Activated CD4-positive, alpha-beta memory T cell treated with anti-CD3 and anti-CD28 coated beads, Interleukin-2, amount 10 ng/mL, durations not matched to agents 7 days and 5 days (primary cell): ENCODE measurements at regions of chr12 and their contacts with region 1.

Region 1: DNA sequence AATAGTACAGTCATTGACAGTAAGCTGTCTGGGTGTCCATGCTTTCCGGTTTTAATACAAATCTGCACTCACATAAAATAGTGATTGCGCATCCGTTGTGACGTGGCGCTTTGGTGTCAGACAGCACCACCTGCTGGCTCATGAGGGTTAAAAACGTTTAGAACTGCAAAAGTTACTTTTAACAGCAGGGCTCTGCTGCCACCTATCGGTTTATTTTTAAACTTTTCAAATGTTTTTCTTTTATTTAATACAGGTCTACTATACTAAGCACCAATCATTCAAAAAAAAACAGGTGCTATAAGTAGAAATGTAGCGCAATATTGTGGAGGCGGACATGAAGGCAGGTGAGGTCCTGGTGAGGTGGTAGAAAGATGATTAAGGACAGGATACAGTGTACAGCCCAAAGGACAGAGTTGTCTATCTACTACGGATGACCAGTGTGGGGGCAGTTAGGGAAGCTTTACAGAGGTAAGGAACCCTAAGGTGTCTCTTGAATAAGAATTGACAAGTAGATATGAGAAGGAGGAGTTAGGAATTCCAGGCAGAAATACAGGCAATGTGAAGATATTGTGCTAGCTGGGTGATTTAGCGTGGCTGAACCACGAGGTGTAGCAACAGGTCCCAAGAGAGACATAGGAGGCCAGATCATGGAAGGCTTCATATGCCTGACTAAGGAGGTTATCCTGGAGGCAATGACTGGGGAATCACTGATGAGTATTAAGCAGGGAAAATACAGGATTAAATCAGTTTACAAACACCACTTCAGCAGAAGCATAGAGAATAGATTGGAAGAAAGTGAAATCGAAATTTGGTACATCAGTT is 91.5 kb upstream of the PRB2 start:
- DNase-seq: peak; percentile 84
- H3K4me3 Mint-ChIP-seq: no peak overlapping the region
- H3K27ac Mint-ChIP-seq: no peak overlapping the region
- H3K4me1 Mint-ChIP-seq: peaks cover 4% of the 10 kb centered on the region
- H3K27me3 Mint-ChIP-seq: peaks cover 27% of the 10 kb centered on the region

Region 2: DNA sequence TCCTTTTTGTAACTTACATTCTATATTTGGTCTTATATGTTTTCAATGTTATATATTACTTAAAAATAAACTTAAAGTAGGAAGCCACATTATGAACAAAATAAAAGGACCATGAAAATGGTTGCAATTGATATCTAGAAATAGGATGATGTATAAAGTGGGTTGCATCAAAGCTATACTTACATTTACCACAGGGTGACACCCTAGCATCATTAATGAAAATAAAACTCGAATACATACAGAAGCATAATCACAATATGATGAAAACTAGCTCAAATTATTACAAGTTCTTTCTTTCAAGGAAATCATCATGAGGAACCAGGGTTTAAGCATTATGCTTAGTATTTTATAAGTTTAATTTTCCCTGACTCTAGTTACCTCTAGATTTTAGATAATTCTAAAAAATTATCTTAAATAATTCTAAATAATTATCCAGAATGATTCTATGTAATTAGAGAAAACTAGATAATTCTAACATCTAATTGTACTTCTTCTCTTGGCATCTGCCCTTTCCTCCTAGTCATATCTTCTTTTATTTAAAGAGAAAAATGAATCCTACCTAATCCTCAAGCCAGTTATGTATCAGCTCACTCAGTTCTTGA is 715.6 kb before region 1 on chr12:
- CTCF ChIA-PET with region 1: interaction called, 17 read pairs
- POLR2A ChIA-PET with region 1: no interaction called
- DNase-seq: no peak
- H3K4me3 Mint-ChIP-seq: no peak overlapping the region
- H3K27ac Mint-ChIP-seq: no peak overlapping the region
- H3K4me1 Mint-ChIP-seq: no peaks in the 10 kb centered on the region
- H3K27me3 Mint-ChIP-seq: peaks cover 44% of the 10 kb centered on the region

Region 3: DNA sequence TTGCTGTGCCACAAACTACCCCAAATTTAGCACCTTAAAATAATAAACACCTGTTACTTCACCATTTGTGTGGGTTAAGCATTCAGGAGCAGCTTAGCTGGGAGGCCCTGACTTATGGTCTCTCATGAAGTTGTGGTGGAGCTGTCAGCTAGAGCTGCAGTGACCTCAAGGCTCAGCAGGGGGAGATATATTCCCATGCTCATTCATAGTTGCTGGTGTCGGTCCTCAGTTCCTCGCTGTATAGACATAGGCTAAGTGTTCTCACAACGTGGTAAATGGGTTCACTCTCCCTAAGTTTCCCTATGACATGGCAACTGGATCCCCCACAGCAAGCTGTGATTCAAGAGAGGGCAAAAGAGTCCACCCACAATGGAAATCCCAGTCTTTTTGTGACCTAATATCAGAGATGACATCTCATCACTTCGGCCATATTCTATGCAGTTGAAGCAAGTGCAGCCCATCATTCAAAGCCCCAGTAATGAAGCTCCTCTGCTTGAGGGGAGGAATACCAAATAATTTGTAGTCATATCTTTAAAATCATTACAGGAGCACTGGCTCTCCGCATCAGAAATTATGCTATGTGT is 258.4 kb before region 1 on chr12:
- CTCF ChIA-PET with region 1: interaction called, 17 read pairs
- POLR2A ChIA-PET with region 1: no interaction called
- DNase-seq: peak; percentile 35
- H3K4me3 Mint-ChIP-seq: no peak overlapping the region
- H3K27ac Mint-ChIP-seq: no peak overlapping the region
- H3K4me1 Mint-ChIP-seq: no peaks in the 10 kb centered on the region
- H3K27me3 Mint-ChIP-seq: peaks cover 6% of the 10 kb centered on the region

Region 4: GRCh38 chr12:11513288-11513687 is 26.5 kb after region 1 on chr12:
- CTCF ChIA-PET with region 1: no interaction called
- POLR2A ChIA-PET with region 1: no interaction called
- DNase-seq: no peak
- H3K4me3 Mint-ChIP-seq: no peak overlapping the region
- H3K27ac Mint-ChIP-seq: no peak overlapping the region
- H3K4me1 Mint-ChIP-seq: no peaks in the 10 kb centered on the region
- H3K27me3 Mint-ChIP-seq: peaks cover 11% of the 10 kb centered on the region